B cell (primary cell): ENCODE measurements at regions of chr4 and their contacts with region 1.

Region 1: GRCh38 chr4:145609481-145610427 is 9.4 kb upstream of the MMAA start:
- DNase-seq: peak; percentile 60
- ATAC-seq: no peak
- H3K4me3 ChIP-seq: no peak overlapping the region
- H3K4me3 Mint-ChIP-seq: no peak overlapping the region
- H3K27ac ChIP-seq: no peak overlapping the region
- H3K27ac Mint-ChIP-seq: no peak overlapping the region
- H3K4me1 ChIP-seq: no peaks in the 10 kb centered on the region
- H3K4me1 Mint-ChIP-seq: no peaks in the 10 kb centered on the region
- H3K27me3 ChIP-seq: no peaks in the 10 kb centered on the region
- H3K27me3 Mint-ChIP-seq: peaks cover 6% of the 10 kb centered on the region
- CTCF ChIP-seq: peak; percentile 77

Region 2: GRCh38 chr4:145154573-145154972 is 455.2 kb before region 1 on chr4:
- CTCF ChIA-PET with region 1: interaction called, 10 read pairs
- POLR2A ChIA-PET with region 1: no interaction called
- intact Hi-C with region 1: loop called (anchors 1 kb)
- DNase-seq: peak; percentile 49
- ATAC-seq: peak; percentile 47
- H3K4me3 ChIP-seq: no peak overlapping the region
- H3K4me3 Mint-ChIP-seq: no peak overlapping the region
- H3K27ac ChIP-seq: no peak overlapping the region
- H3K27ac Mint-ChIP-seq: no peak overlapping the region
- H3K4me1 ChIP-seq: peaks cover 0 to 3% of the 10 kb centered on the region in 2 donors
- H3K4me1 Mint-ChIP-seq: peaks cover 5% of the 10 kb centered on the region
- H3K27me3 ChIP-seq: no peaks in the 10 kb centered on the region
- H3K27me3 Mint-ChIP-seq: no peaks in the 10 kb centered on the region
- CTCF ChIP-seq: peak; percentile 53

Region 3: DNA sequence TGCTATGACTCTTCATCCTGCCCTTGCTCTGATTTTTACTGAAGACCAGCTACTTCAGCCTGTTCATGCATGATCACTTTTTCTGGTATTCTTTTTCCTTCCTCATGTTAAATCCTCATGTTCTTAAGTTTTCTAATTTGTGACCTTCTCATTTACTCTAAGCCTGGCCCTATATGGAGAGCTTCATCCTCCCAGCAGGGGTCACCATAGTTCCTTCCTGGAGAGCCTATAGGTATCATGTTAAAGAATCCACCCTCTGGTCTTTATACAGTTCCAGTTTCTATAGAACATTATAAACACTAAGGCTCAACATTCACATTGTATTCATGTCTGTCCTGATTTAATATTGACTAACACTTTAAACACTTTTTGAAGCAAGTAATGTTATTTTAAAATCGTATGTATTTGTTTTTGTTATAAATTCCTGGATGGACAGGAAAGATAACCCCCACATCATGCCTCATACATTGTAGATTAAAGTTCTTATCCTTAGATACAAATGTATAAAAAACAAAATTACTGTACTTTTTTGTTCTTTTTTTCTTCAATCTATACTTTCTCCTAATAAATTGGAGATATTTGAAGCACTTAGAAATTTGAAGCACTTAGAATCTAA is 375.6 kb before region 1 on chr4:
- CTCF ChIA-PET with region 1: interaction called, 7 read pairs
- POLR2A ChIA-PET with region 1: no interaction called
- intact Hi-C with region 1: loop called (anchors 2 kb)
- DNase-seq: peak; percentile 59
- ATAC-seq: peak; percentile 53
- H3K4me3 ChIP-seq: no peak overlapping the region
- H3K4me3 Mint-ChIP-seq: no peak overlapping the region
- H3K27ac ChIP-seq: no peak overlapping the region
- H3K27ac Mint-ChIP-seq: no peak overlapping the region
- H3K4me1 ChIP-seq: no peaks in the 10 kb centered on the region
- H3K4me1 Mint-ChIP-seq: no peaks in the 10 kb centered on the region
- H3K27me3 ChIP-seq: no peaks in the 10 kb centered on the region
- H3K27me3 Mint-ChIP-seq: peaks cover 8% of the 10 kb centered on the region
- CTCF ChIP-seq: peak; percentile 73

Region 4: GRCh38 chr4:145644699-145645098 is 34.9 kb after region 1 on chr4:
- CTCF ChIA-PET with region 1: no interaction called
- POLR2A ChIA-PET with region 1: no interaction called
- intact Hi-C with region 1: no loop called
- DNase-seq: no peak
- ATAC-seq: no peak
- H3K4me3 ChIP-seq: no peak overlapping the region
- H3K4me3 Mint-ChIP-seq: no peak overlapping the region
- H3K27ac ChIP-seq: no peak overlapping the region
- H3K27ac Mint-ChIP-seq: no peak overlapping the region
- H3K4me1 ChIP-seq: no peaks in the 10 kb centered on the region
- H3K4me1 Mint-ChIP-seq: no peaks in the 10 kb centered on the region
- H3K27me3 ChIP-seq: no peaks in the 10 kb centered on the region
- H3K27me3 Mint-ChIP-seq: no peaks in the 10 kb centered on the region
- CTCF ChIP-seq: no peak